Sigmoid colon (tissue), 7 donors: ENCODE measurements at regions of chr2 and their contacts with region 1.

Region 1: DNA sequence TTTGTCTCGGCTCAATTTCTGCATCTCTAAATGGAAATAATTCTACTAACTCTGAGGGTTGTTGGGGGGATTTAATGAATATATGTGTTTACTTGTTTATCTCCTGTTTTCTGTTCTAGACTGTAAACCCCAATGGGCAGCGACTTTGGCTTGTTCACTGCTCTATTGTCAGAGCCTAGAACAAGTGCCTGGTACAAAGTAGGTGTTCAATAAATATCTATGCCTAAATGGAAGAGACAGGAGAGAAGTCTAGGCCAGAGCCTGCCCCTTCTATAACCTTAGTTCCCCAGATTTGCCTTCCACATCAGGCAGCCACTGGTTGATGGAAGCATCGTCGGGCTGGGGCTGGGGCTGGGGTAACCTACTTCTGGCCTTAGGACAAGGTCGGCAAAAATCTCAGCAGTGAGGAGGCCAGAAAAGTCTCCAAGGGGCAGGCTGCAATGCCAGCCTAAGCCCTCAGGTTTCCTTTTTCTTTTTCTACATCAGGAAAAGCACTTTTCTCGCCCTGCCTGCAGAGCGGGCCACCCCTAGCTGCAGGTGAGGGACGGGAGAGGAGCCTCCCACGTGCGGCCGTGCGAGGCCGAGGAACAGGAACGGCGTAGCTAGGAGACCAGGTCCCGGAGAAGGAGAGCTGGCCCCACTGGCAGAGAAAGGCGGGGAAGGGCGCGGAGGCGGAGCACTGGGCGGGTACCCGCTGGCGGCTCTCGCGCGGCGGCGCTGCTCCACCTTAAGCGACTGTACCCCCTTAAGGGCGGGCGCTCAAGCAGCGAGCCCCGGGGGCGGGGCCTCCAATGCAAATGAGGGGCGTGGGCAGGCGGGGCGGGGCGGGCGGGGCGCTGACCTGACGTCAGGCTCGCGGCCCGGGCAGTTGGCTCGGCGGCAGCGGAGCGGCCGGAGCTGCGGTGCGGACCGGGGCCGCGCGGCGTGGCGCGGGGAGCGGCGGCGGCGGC is at the start of gene CNNM4:
- DNase-seq: peak; percentile 97
- H3K4me3 ChIP-seq: peak within 1 kb of the TSS; percentile 64 to 83 (median 74)
- H3K27ac ChIP-seq: peak within 1 kb of the TSS; percentile 81 to 87 (median 84)
- H3K4me1 ChIP-seq: peaks cover 0 to 47% (median 43%) of the 10 kb centered on the region in 4 donors
- H3K27me3 ChIP-seq: no peaks in the 10 kb centered on the region
- CTCF ChIP-seq: peak in 2 of 4 experiments; percentile 16 to 34
- EP300 ChIP-seq: no peak
- POLR2A ChIP-seq: no peak
- total RNA-seq, gene CNNM4: 2.3 to 6.6 (median 3.4) TPM

Region 2: DNA sequence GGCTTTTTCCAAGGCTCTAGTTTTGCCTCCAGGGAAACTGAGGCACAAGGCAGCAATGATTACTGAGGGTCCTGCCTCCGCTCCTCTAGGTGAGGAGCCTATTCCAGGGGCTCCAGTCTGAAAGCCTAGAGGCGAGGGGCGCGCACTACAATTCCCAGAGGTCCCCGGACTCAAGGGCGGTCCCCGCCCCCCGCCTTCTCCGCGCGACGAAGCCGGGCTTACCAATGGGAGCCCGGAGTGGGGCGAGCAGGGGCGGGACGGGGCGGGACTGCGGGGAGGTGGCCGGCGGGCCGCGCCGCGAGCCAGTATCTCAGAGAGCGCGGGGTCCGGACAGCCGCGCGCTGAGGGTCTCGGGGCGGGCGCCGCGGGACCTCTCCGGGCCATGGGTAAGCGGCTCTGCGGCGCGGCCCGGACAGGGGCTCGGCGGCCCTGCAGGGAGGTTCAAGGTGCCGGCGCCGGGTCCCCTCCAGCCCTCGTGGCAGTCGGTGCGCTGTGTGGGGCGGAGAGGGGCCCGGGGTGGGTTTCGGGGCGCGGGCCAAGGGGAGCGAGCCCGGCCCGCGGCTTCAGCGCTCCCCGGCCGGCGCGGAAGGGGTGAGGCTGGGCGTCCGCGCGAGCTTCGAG is 223.8 kb before region 1 on chr2 and contains the start of gene ARID5A:
- intact Hi-C with region 1: loop called (anchors 5 kb)
- DNase-seq: peak; percentile 97
- H3K4me3 ChIP-seq: peak within 1 kb of the TSS; percentile 86 to 99 (median 96)
- H3K27ac ChIP-seq: peak within 1 kb of the TSS; percentile 97 to 99 (median 98)
- H3K4me1 ChIP-seq: peaks cover 0 to 88% (median 78%) of the 10 kb centered on the region in 4 donors
- H3K27me3 ChIP-seq: no peaks in the 10 kb centered on the region
- CTCF ChIP-seq: peak; percentile 31 to 76 (median 58)
- EP300 ChIP-seq: peak in 1 of 4 donors; percentile 22
- POLR2A ChIP-seq: peak; percentile 29 to 79
- total RNA-seq, gene ARID5A: 14.3 to 179 (median 30.4) TPM

Region 3: DNA sequence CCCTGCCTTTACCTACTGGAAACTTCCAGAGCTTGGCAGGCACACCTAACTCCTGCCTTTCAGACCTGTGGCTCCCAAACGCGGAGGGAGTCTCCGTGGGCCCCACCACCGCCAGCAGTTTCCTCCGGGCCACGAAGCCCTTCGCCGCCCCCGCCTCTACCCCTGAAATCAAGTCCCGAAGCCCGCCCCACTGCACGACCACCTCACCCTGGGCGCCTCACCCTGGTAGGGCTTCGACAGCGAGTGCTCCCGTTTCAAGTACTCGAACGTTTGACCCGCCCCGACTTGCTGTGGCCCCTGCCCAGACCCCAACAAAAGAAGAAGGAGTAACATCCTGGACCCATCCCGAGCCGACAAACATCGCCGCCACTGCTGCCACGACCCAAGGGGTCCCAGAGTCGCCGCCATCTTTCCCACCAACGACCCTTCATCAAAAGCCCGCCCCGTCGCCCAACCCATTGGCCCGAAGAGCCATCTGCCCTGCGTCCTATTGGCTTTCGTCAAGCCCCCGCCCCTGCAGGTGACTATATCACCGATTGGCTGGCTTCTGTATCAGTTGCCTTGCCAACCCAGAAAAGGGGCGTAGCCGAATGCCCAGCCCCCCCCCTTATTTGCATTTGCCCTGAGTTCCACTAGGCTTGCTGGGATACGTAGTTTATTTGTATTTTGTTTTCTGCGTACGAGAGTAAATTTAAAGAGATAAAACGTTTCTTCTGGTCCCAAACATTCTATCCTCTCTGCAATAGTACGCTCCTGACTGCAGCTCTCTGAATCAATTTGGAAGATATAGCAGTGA is 20.5 kb before region 1 on chr2 and contains the start of gene LMAN2L:
- intact Hi-C with region 1: loop called (anchors 1 kb)
- DNase-seq: peak; percentile 99
- H3K4me3 ChIP-seq: peak within 1 kb of the TSS; percentile 47 to 95 (median 74)
- H3K27ac ChIP-seq: peak within 1 kb of the TSS; percentile 73 to 84 (median 78)
- H3K4me1 ChIP-seq: peaks cover 0 to 35% (median 19%) of the 10 kb centered on the region in 4 donors
- H3K27me3 ChIP-seq: no peaks in the 10 kb centered on the region
- CTCF ChIP-seq: no peak
- EP300 ChIP-seq: no peak
- POLR2A ChIP-seq: peak; percentile 26 to 48
- total RNA-seq, gene LMAN2L: 11.9 to 23.2 (median 17.2) TPM

Region 4: GRCh38 chr2:96816128-96816835 is 56.0 kb after region 1 on chr2 and contains the start of gene CNNM3:
- intact Hi-C with region 1: loop called (anchors 1 kb)
- DNase-seq: peak; percentile 98
- H3K4me3 ChIP-seq: peak within 1 kb of the TSS; percentile 60 to 88 (median 68)
- H3K27ac ChIP-seq: peak within 1 kb of the TSS; percentile 85 to 96 (median 96)
- H3K4me1 ChIP-seq: peaks cover 0 to 55% (median 45%) of the 10 kb centered on the region in 4 donors
- H3K27me3 ChIP-seq: no peaks in the 10 kb centered on the region
- CTCF ChIP-seq: peak; percentile 31 to 77 (median 63)
- EP300 ChIP-seq: no peak
- POLR2A ChIP-seq: peak in 1 of 2 donors; percentile 46
- total RNA-seq, gene CNNM3: 8.9 to 16.6 (median 11.8) TPM

Region 5: DNA sequence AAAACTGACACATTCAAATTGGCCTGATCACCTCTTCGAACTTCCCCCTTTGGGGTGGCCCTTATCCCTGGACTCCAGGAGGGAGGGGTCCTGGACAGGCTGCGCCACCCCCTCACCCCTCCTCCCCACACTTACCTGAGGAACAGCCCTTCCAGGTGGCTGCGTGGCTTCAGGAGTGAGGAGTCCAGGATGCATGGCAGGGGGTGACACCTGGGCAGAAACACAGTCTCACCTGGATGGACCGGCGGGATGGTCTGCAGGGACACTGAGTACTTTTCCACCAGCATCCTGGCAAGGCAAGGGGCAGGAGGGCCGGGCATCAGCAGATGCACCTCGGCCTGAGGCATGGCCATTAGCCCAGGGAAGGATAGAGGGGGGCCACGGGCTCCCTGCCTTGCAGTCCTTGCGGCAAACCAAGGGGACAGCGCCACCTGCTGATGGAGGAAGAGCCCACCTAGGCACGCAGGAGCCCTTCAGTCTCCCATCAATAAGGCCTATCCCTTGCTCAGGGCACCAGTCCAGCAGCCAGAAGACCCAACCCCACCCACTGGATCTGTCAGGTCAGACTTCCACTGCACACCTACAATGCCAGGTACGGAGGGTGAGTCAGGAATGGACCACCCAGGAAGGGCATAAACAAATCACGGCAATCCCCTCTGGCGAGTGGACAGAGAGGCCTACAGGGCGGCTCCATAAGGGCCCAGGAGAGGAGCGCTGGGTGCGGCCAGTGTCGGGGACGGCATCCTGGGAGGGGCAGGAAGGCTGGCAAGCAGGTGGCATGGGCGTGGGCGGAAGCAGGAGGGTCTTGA is 200.0 kb after region 1 on chr2:
- intact Hi-C with region 1: loop called (anchors 5 kb)
- DNase-seq: peak; percentile 95
- H3K4me3 ChIP-seq: no peak overlapping the region
- H3K27ac ChIP-seq: no peak overlapping the region
- H3K4me1 ChIP-seq: peaks cover 0 to 15% (median 7%) of the 10 kb centered on the region in 4 donors
- H3K27me3 ChIP-seq: no peaks in the 10 kb centered on the region
- CTCF ChIP-seq: peak; percentile 91 to 96 (median 94)
- EP300 ChIP-seq: no peak
- POLR2A ChIP-seq: no peak